Naive thymus-derived CD8-positive, alpha-beta T cell (primary cell): ENCODE measurements at regions of chr7 and their contacts with region 1.

Region 1: DNA sequence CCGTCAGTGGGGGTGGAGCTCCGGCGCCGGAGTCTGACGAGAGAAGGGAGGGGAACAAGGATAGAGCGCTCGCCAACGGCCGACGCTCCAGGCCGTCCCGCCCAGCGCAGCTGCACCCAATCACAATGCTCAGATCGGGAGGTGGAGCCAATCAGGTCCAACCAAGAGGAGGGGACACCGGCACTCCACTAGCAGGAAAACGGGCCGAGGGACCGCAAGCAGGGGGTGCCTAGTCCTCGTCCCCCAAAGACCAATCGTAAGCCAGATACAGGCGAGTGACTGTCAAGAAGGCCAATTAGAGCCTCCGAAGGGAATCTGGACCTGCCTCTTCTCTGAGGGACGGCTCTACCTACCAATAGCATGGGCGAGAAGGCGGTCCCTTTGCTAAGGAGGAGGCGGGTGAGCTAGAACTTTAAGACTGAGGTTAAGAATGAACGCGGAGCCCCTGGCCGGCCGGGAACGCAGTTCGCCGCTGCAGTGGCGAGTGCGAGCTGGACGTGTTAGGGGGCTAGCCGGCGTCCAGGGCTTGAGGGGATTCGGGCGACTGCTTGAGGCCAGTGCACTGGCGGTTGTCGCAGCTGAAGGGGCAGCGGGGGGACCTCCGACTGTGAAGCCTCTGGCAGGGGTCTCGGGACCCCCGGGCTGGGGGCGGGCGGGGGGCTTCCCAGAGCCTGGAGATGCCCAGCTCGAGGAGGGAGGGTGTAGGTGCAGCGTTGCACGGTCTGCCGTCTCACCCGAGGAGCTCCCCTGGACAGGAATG is at the start of gene FBXO24:
- DNase-seq: peak; percentile 96 to 100 (median 100)
- ATAC-seq: peak; percentile 83 to 85
- H3K4me3 Mint-ChIP-seq: peak within 1 kb of the TSS; percentile 93 to 100 (median 97)
- H3K27ac Mint-ChIP-seq: peak within 1 kb of the TSS in 7 of 10 donors; percentile 81 to 98 (median 97)
- H3K4me1 Mint-ChIP-seq: peaks cover 21 to 41% (median 31%) of the 10 kb centered on the region in 4 donors
- H3K27me3 Mint-ChIP-seq: peaks cover 0 to 10% (median 3%) of the 10 kb centered on the region in 5 donors
- polyA plus RNA-seq, gene FBXO24: 0.60 to 0.95 (median 0.61) TPM

Region 2: DNA sequence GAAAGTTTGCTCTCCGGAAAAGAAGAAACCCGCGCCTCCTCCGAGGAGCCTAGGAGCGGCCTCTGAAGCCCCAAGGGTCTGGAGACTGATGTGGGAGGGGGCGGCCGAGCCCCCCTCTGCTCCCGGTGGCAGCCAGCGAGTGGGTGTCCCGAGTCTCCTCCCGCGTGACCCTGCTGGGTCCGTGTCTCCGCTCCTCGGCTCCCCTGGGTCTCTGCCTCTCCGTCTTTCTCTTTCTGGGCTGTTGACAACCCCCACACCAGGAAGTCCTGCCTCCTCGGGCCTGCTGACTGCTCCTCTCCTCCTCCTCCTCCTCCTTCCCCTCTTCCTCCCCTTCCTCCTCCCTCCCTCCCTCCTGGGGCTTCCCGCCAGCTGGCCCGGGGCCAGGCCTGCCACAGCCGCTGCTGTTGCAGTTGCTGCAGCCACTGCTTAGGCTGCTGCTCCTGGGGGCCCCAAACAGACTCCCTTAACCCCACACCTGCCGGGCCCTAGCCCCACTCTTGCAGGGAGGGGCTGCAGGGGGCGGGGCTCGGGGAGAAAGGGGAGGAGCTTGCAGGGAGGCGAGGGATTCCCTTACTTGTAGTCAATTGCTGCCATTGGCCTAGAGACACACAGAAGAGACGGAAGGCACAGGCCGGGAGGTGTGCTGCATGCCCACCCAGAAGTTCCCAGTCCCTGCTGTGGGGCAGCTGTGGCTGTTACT is 107.3 kb before region 1 on chr7 and contains the start of gene TSC22D4:
- POLR2A ChIA-PET with region 1: interaction called, 60 read pairs
- DNase-seq: peak; percentile 85 to 98 (median 95)
- ATAC-seq: peak; percentile 74 to 76
- H3K4me3 Mint-ChIP-seq: peak within 1 kb of the TSS; percentile 88 to 100 (median 93)
- H3K27ac Mint-ChIP-seq: peak within 1 kb of the TSS; percentile 78 to 96 (median 88)
- H3K4me1 Mint-ChIP-seq: peaks cover 15 to 51% (median 48%) of the 10 kb centered on the region in 4 donors
- H3K27me3 Mint-ChIP-seq: no peaks in the 10 kb centered on the region
- polyA plus RNA-seq, gene TSC22D4: 30.3 to 35.9 (median 31.0) TPM

Region 3: DNA sequence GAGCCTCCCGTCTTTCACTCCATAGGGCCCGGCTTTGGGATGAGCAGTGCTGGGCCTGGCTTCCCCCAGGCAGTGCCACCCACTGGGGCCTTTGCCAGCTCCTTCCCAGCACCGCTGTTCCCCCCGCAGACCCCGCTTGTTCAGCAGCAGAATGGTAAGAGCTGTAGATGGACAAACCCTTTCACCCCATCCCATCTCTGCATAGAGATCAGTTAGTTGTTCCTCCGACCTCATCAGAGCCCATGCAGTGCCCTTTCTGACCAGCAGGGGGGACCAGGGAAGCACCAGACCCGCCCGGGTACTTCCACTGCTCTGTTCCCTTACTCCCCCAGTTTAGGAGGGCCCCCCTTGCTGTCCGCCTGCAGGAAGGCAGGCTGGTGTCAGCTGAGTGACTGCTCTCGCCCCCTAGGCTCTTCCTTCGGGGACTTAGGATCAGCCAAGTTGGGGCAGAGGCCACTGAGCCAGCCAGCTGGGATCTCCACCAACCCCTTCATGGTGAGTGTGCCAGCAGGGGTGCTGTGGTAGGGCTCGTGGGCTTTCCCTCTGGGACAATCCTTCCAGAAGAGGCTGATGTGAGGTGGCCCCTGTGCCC is 22.5 kb before region 1 on chr7:
- POLR2A ChIA-PET with region 1: interaction called, 333 read pairs
- DNase-seq: peak; percentile 66 to 91 (median 83)
- ATAC-seq: peak; percentile 75 to 78
- H3K4me3 Mint-ChIP-seq: peak overlapping the region in 1 of 10 donors; percentile 24
- H3K27ac Mint-ChIP-seq: peak overlapping the region in 8 of 10 donors; percentile 0 to 78 (median 60)
- H3K4me1 Mint-ChIP-seq: peaks cover 16 to 41% (median 36%) of the 10 kb centered on the region in 4 donors
- H3K27me3 Mint-ChIP-seq: no peaks in the 10 kb centered on the region

Region 4: DNA sequence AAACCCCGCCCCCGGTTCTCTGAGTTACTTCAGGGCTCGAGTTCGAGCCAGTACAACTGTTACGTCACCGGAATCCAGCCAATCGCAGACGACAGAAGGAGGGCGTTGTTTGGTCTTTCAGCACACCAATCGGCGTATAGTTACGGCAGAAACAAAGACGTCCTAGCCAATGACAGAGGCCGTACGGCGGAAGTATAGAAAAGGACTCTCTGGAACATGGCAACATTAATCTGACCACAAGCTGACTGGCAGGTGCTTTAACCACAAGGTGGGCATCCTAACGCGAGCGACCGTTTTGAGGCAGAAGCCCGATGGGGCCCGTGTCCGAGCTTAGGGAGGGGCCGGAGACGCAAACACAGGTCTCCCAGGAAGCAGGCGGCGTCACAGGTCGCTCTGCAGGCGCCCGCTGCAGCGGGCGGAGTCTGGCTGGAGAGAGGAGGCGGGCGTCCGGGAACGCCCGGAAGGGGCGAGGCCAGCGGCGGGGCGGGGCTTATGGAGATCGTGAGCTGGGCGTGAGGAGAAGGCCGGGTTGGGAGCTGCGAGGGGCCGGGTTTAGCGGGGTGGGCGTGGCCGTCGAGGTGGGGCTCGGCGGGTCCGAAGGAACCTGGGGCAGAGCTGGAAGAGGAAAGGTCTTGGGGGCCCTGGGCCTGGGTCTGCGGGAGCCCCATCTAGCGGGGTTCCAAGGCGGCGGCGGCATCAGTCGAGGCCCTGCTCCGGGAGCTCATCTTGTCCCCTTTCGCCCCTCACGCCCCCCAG is 25.7 kb after region 1 on chr7 and contains the start of gene MOSPD3:
- POLR2A ChIA-PET with region 1: interaction called, 128 read pairs
- DNase-seq: peak; percentile 95 to 100 (median 98)
- ATAC-seq: peak; percentile 89 to 92
- H3K4me3 Mint-ChIP-seq: peak within 1 kb of the TSS; percentile 95 to 100 (median 98)
- H3K27ac Mint-ChIP-seq: peak within 1 kb of the TSS; percentile 96 to 100 (median 100)
- H3K4me1 Mint-ChIP-seq: peaks cover 10 to 23% (median 21%) of the 10 kb centered on the region in 4 donors
- H3K27me3 Mint-ChIP-seq: no peaks in the 10 kb centered on the region
- polyA plus RNA-seq, gene MOSPD3: 16.0 to 21.0 (median 20.0) TPM

Region 5: DNA sequence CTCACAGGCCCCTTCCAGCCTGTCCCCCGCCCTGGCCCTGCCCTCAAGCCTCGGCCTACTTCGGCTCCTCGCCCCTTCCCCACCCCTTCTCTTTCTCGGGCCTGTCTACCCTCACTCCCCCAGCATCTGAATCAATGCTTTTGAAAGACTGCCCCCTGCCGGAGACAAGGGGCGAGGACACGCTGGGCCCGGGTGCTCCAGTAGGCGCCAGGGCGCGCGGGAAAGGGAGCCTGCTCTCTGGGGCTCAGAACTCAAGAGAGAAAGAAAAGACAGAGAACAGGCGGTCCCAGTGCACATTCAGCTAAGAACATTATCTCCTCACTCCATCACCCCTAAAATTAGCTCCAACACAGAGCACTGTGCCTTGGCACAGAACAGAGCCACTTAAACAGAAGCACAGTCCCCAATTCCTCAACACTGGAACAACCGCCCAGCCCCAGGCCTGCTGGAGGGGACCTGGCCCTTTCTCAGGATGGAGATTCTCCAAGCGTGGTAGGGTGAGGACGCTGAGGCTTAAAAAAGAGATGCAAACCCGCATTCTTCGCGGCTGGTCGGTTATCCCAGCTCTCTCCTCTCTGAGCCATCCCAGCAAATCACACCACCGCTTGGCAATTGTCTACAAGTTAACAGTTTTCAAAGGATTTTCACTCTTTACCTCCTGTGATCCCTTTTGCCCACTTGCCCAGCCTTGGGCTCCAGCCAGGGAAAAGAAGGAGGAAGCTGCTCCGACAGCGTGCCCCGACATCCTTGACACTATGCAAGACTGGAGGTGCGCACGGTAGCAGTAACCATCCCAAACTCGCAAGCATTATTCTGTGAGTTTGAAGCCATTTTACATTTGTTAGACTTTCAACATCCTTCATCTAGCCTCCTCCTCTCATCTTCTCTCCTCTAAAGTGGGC is 105.5 kb after region 1 on chr7:
- POLR2A ChIA-PET with region 1: interaction called, 57 read pairs
- DNase-seq: peak; percentile 59 to 89 (median 78)
- ATAC-seq: peak; percentile 71 to 73
- H3K4me3 Mint-ChIP-seq: peak overlapping the region; percentile 88 to 99 (median 95)
- H3K27ac Mint-ChIP-seq: peak overlapping the region; percentile 30 to 97 (median 90)
- H3K4me1 Mint-ChIP-seq: peaks cover 23 to 56% (median 46%) of the 10 kb centered on the region in 4 donors
- H3K27me3 Mint-ChIP-seq: no peaks in the 10 kb centered on the region

Region 6: DNA sequence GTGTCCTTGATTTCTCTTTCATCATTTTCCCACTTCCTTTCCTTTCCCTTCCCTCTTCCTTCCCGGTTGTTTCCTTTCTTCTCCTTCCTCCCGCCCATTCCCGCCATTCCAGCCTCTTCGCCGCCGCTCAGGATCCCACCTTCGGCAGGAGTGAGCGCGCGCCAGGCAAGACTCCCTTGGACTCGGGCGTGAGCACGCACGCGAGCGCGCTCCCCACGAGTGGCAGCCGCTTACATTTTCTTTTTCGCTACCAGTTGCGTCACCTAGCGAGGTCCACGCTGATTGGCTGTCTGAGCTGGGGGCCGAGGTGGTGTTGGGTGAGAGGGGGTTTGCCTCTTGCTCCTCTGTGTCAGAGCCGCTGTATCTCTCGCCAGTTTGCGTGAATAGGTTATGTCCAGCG is 158.7 kb after region 1 on chr7:
- POLR2A ChIA-PET with region 1: no interaction called
- DNase-seq: peak in 8 of 10 donors; percentile 8 to 77 (median 38)
- ATAC-seq: peak; percentile 86 to 87
- H3K4me3 Mint-ChIP-seq: peak overlapping the region in 9 of 10 donors; percentile 48 to 86 (median 75)
- H3K27ac Mint-ChIP-seq: peak overlapping the region in 4 of 10 donors; percentile 67 to 83 (median 75)
- H3K4me1 Mint-ChIP-seq: peaks cover 3 to 7% (median 5%) of the 10 kb centered on the region in 4 donors
- H3K27me3 Mint-ChIP-seq: peaks cover 4 to 39% (median 10%) of the 10 kb centered on the region in 5 donors